HCT116 (cell line): ENCODE measurements at regions of chr6 and their contacts with region 1.

Region 1: DNA sequence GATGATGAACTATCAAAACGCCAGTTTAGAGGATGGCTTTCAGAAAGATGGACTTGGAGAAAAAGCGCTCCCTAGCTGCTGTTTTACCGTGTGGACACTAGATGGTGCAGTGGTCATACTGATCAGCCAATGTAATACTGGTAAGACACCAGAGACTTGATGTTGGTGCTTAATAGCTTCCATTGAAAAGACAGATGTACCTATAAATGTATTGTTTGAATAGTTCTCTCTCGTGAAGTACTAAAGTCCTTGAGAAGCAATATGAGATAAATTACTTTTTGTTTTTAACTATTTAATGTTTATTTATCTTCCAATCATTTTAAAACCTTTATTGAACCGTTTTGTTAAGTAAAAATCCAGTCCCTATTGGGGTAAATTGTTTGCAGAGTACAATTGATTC is 63.9 kb upstream of the FUCA2 start:
- DNase-seq: peak; percentile 73
- ATAC-seq: peak; percentile 91
- H3K4me3 ChIP-seq: no peak overlapping the region
- H3K27ac ChIP-seq: no peak overlapping the region
- H3K4me1 ChIP-seq: no peaks in the 10 kb centered on the region
- H3K27me3 ChIP-seq: no peaks in the 10 kb centered on the region
- CTCF ChIP-seq: peak; percentile 71 to 90 (median 78)
- POLR2A ChIP-seq: no peak
- RAD21 ChIP-seq: peak; percentile 92

Region 2: GRCh38 chr6:143842902-143843676 is 267.6 kb after region 1 on chr6 and contains the start of gene LTV1:
- CTCF ChIA-PET with region 1: interaction called, 3 read pairs
- POLR2A ChIA-PET with region 1: no interaction called
- RAD21 ChIA-PET with region 1: interaction called, 3 to 5 read pairs
- intact Hi-C with region 1: loop called (anchors 5 kb)
- DNase-seq: peak; percentile 87
- ATAC-seq: peak; percentile 98
- H3K4me3 ChIP-seq: peak within 1 kb of the TSS; percentile 93 to 97
- H3K27ac ChIP-seq: peak within 1 kb of the TSS; percentile 57
- H3K4me1 ChIP-seq: peaks cover 4 to 11% of the 10 kb centered on the region in 2 experiments; a peak in 3 of 4 replicates
- H3K27me3 ChIP-seq: no peaks in the 10 kb centered on the region
- CTCF ChIP-seq: no peak
- POLR2A ChIP-seq: peak; percentile 65
- RAD21 ChIP-seq: no peak
- total RNA-seq, gene LTV1: 40.3 TPM

Region 3: DNA sequence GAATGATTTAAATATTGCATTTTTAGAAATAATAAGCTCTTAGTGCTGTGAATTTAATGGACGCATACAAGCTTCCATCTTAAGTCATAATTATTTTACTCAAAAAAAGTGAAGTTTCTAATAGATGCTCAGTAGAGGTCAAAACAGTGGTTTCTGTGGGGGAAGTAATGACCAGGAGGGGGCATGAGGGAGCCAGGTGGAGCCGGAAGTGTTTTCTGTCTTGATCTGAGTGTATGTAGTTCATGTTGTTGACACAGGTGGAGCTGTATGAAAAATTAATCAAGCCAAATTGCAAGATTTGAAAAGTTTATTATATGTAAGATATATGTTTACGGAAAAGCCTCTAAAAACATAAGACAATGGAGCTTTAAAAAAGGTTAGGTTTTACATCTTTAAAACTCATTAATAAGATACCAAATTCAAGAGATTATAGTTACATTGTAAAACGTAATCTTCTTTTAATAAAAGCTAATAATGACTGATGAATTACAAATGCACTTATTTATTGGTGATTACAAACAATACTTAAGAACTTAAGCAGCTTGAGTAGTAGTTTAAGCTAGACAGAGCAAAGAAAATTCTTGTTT is 364.7 kb after region 1 on chr6:
- CTCF ChIA-PET with region 1: interaction called, 26 read pairs
- POLR2A ChIA-PET with region 1: no interaction called
- RAD21 ChIA-PET with region 1: interaction called, 7 to 13 read pairs
- intact Hi-C with region 1: no loop called
- DNase-seq: peak; percentile 62
- ATAC-seq: peak; percentile 89
- H3K4me3 ChIP-seq: no peak overlapping the region
- H3K27ac ChIP-seq: no peak overlapping the region
- H3K4me1 ChIP-seq: no peaks in the 10 kb centered on the region; a peak in 1 of 4 replicates
- H3K27me3 ChIP-seq: no peaks in the 10 kb centered on the region
- CTCF ChIP-seq: peak; percentile 85 to 94 (median 94)
- POLR2A ChIP-seq: no peak
- RAD21 ChIP-seq: peak; percentile 66

Region 4: DNA sequence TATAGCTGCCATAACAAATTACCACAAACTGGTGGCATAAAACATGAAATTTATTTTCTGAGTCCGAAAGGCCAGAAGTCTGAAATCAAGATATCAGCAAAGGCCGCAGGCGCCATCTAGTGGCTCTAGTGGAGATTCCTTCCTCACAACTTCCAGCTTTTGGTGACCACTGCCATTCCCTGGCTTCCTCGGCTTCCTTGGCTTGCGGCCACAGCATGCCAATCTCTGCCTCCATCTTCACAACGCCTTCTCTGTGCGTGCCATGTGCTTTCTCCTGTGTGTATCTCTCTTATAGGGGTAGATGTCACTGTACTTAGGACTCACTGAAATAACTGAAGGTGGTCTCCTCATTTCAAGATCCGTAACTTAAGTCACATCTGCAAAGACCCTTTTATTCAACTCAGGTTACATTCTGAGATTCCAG is 438.1 kb after region 1 on chr6:
- CTCF ChIA-PET with region 1: interaction called, 58 read pairs
- POLR2A ChIA-PET with region 1: no interaction called
- RAD21 ChIA-PET with region 1: interaction called, 9 to 20 read pairs
- intact Hi-C with region 1: loop called (anchors 1 kb)
- DNase-seq: peak; percentile 73
- ATAC-seq: peak; percentile 79
- H3K4me3 ChIP-seq: no peak overlapping the region
- H3K27ac ChIP-seq: no peak overlapping the region
- H3K4me1 ChIP-seq: 0 out of 4 replicates have a peak, but pooled peaks cover 0 to 3% of the 10 kb centered on the region in 2 experiments
- H3K27me3 ChIP-seq: no peaks in the 10 kb centered on the region
- CTCF ChIP-seq: peak; percentile 86 to 90 (median 89)
- POLR2A ChIP-seq: no peak
- RAD21 ChIP-seq: peak; percentile 96

Region 5: GRCh38 chr6:144090384-144090783 is 514.9 kb after region 1 on chr6:
- CTCF ChIA-PET with region 1: interaction called, 5 read pairs
- POLR2A ChIA-PET with region 1: no interaction called
- RAD21 ChIA-PET with region 1: interaction called in 1 of 2 experiments, 3 read pairs
- intact Hi-C with region 1: loop called (anchors 2 kb)
- DNase-seq: no peak
- ATAC-seq: no peak
- H3K4me3 ChIP-seq: no peak overlapping the region
- H3K27ac ChIP-seq: no peak overlapping the region
- H3K4me1 ChIP-seq: peaks cover 5 to 9% of the 10 kb centered on the region in 2 experiments; a peak in 3 of 4 replicates
- H3K27me3 ChIP-seq: no peaks in the 10 kb centered on the region
- CTCF ChIP-seq: peak in 1 of 3 experiments; percentile 19; a peak in 2 of 6 replicates
- POLR2A ChIP-seq: no peak
- RAD21 ChIP-seq: peak; percentile 48; the same call in 1 of the 2 replicates

Region 6: GRCh38 chr6:144215932-144216667 is 640.7 kb after region 1 on chr6:
- CTCF ChIA-PET with region 1: interaction called, 3 read pairs
- POLR2A ChIA-PET with region 1: no interaction called
- RAD21 ChIA-PET with region 1: no interaction called
- intact Hi-C with region 1: loop called (anchors 5 kb)
- DNase-seq: peak; percentile 91
- ATAC-seq: peak; percentile 87
- H3K4me3 ChIP-seq: peak overlapping the region; percentile 45 to 58
- H3K27ac ChIP-seq: peak overlapping the region; percentile 61
- H3K4me1 ChIP-seq: peaks cover 7 to 22% of the 10 kb centered on the region in 2 experiments; a peak in 3 of 4 replicates
- H3K27me3 ChIP-seq: no peaks in the 10 kb centered on the region
- CTCF ChIP-seq: peak; percentile 59 to 64 (median 63); a peak in 5 of 6 replicates
- POLR2A ChIP-seq: no peak
- RAD21 ChIP-seq: peak; percentile 69

Region 7: GRCh38 chr6:144482142-144482541 is 906.7 kb after region 1 on chr6:
- CTCF ChIA-PET with region 1: interaction called, 5 read pairs
- POLR2A ChIA-PET with region 1: no interaction called
- RAD21 ChIA-PET with region 1: interaction called in 1 of 2 experiments, 3 read pairs
- intact Hi-C with region 1: loop called (anchors 1 kb)
- DNase-seq: peak; percentile 60
- ATAC-seq: peak; percentile 87
- H3K4me3 ChIP-seq: no peak overlapping the region
- H3K27ac ChIP-seq: no peak overlapping the region
- H3K4me1 ChIP-seq: no peaks in the 10 kb centered on the region
- H3K27me3 ChIP-seq: no peaks in the 10 kb centered on the region
- CTCF ChIP-seq: peak; percentile 62 to 75 (median 70)
- POLR2A ChIP-seq: no peak
- RAD21 ChIP-seq: peak; percentile 86